ENCODE measurements at regions of chr11 and their contacts with region 1.

Region 1: GRCh38 chr11:61679893-61680621 is at the start of gene DAGLA:
- DNase-seq: peak; percentile 33
- H3K4me3 ChIP-seq: peak within 1 kb of the TSS in 2 of 3 experiments; percentile 45 to 52
- H3K27ac ChIP-seq: no peak within 1 kb of the TSS
- H3K4me1 ChIP-seq: peaks cover 4% of the 10 kb centered on the region
- H3K27me3 ChIP-seq: peaks cover 8% of the 10 kb centered on the region
- CTCF ChIP-seq: peak; percentile 67 to 85
- total RNA-seq, gene DAGLA: 0.33 to 0.67 TPM

Region 2: DNA sequence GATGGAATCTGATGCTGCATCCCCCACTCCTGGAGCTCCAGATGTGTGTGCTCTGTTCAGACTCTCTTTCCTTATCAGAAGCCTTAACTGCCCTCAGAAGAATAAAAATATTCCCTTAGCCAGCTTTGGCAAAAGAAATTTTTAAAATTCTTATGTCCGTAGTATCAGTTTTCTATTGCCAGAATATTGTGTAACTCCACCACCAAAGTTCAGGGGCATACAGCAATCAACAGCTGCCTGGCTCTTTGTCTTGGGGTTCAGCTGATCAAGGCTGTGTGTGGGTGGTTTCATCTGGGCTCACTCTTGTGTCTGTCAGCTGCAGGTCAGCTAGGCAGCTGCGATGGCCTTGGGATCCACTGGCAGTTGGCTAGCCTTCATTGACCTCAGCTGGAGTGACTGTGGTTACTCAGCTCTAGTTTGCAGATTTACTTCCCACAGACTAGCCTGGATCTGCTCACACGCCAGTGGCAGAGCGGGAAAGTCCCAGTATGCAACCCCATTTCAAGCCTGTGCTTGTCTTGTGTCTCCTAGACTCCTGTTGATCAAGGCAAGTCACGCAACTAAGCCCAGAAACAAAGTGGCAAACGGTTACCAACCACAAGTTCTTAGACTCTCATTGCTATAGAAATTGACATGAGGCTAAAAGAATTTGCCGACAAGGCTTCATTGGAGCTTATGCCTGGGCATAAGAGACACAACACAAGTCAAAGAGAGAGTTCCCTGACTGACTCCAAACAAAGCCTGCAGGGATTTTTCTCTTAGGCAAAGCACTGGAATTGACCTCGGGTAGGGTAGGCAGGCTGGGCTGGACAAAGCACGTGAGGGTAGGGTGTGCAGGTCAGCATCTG is 310.5 kb before region 1 on chr11:
- CTCF ChIA-PET with region 1: no interaction called
- dilution Hi-C with region 1: no loop called
- in situ Hi-C with region 1: no loop called
- intact Hi-C with region 1: no loop called
- DNase-seq: peak; percentile 100
- H3K4me3 ChIP-seq: no peak overlapping the region
- H3K27ac ChIP-seq: peak overlapping the region; percentile 93
- H3K4me1 ChIP-seq: peaks cover 24% of the 10 kb centered on the region
- H3K27me3 ChIP-seq: no peaks in the 10 kb centered on the region
- CTCF ChIP-seq: no peak

Region 3: GRCh38 chr11:61581030-61581928 is 98.8 kb before region 1 on chr11 and contains the start of gene SYT7:
- CTCF ChIA-PET with region 1: no interaction called
- dilution Hi-C with region 1: loop called (anchors 5 kb)
- in situ Hi-C with region 1: no loop called
- intact Hi-C with region 1: no loop called
- DNase-seq: peak; percentile 96
- H3K4me3 ChIP-seq: peak within 1 kb of the TSS; percentile 55 to 80 (median 58)
- H3K27ac ChIP-seq: no peak within 1 kb of the TSS
- H3K4me1 ChIP-seq: peaks cover 8% of the 10 kb centered on the region
- H3K27me3 ChIP-seq: peaks cover 12% of the 10 kb centered on the region
- CTCF ChIP-seq: peak; percentile 5 to 21
- total RNA-seq, gene SYT7: 4.7 to 17.7 TPM

Region 4: DNA sequence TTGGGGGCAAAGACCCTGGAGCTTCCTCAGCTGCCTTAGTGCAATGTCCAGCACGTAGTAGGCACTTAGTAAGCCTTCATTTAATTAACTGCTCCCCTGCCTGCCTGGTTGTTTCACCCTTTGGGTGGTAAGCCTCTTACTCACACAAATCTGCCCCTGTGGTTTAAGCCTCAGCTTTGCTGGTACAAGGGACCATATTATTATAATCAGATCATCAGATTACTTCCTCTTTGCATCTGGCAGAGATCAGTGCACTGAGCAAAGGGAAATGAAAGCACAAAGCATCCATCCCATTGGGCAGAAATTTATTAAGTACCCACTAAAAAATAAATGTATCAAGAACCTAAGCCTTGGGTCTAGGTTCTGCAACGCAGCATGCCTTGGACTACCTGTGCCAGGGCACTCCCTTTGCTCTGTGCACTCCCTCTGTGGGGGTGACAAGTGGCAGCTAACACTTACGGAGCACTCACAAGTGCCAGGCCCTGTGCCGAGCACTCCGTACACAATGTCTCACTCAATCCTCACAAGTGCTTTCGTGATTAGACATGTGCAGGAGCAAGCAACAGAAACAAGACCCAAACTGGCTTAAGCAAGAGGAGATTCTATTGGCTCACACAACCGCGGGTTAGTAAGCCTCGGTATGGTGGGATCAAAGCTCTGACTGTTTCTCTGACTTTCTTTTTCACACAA is 34.7 kb before region 1 on chr11:
- CTCF ChIA-PET with region 1: no interaction called
- dilution Hi-C with region 1: loop called (anchors 5 kb)
- in situ Hi-C with region 1: no loop called
- intact Hi-C with region 1: no loop called
- DNase-seq: no peak
- H3K4me3 ChIP-seq: no peak overlapping the region
- H3K27ac ChIP-seq: no peak overlapping the region
- H3K4me1 ChIP-seq: no peaks in the 10 kb centered on the region
- H3K27me3 ChIP-seq: no peaks in the 10 kb centered on the region
- CTCF ChIP-seq: no peak

Region 5: GRCh38 chr11:61695917-61696316 is 15.9 kb after region 1 on chr11:
- CTCF ChIA-PET with region 1: no interaction called
- dilution Hi-C with region 1: no loop called
- in situ Hi-C with region 1: no loop called
- intact Hi-C with region 1: loop called (anchors 1 kb)
- DNase-seq: peak; percentile 91
- H3K4me3 ChIP-seq: no peak overlapping the region
- H3K27ac ChIP-seq: peak overlapping the region; percentile 28
- H3K4me1 ChIP-seq: peaks cover 60% of the 10 kb centered on the region
- H3K27me3 ChIP-seq: no peaks in the 10 kb centered on the region
- CTCF ChIP-seq: no peak

Region 6: DNA sequence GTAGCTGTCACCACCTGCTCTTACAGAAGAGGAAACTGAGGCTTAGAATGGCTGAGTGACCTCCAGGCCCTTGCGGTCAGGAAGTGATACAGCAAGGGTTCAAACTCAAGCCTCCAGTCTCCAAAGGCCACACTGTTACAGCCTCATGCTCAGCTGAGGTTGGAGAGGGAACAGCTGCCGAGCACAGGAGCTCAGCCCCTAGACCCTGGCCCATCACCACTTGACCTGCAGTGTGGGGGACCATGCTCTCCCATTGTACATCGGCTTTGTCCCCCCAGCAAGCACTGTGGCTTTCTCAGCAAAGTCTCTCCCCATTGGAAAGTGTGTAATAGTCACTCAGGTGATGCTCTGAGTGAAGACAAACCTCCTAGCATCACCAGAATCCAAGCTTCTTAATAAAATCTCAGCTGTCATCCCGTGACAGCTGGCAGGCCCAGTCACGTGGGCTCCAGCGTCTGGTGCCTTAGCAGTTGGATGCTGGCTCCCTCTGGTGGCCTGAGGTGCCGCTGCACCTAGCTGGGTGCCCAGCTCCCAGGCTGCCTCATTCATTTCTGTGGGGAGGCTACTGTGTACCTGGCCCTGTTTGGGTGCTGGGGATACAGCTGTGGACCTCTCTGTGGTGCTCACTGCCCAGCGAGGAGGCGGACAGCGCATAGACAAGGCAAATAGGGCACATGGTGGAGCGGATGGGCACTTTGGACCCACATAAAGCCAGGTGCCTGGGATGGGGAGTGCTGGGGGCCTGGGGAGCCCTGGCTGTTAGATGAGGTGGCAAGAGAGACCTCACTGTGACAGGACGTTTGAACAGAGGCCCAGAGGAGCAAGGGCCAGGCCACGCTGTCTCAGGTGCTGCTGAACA is 53.3 kb after region 1 on chr11:
- CTCF ChIA-PET with region 1: interaction called, 3 read pairs
- dilution Hi-C with region 1: loop called (anchors 5 kb)
- in situ Hi-C with region 1: loop called (anchors 5 kb)
- intact Hi-C with region 1: loop called (anchors 1 kb)
- DNase-seq: peak; percentile 70
- H3K4me3 ChIP-seq: no peak overlapping the region
- H3K27ac ChIP-seq: no peak overlapping the region
- H3K4me1 ChIP-seq: peaks cover 27% of the 10 kb centered on the region
- H3K27me3 ChIP-seq: no peaks in the 10 kb centered on the region
- CTCF ChIP-seq: peak; percentile 99 to 100

Region 7: DNA sequence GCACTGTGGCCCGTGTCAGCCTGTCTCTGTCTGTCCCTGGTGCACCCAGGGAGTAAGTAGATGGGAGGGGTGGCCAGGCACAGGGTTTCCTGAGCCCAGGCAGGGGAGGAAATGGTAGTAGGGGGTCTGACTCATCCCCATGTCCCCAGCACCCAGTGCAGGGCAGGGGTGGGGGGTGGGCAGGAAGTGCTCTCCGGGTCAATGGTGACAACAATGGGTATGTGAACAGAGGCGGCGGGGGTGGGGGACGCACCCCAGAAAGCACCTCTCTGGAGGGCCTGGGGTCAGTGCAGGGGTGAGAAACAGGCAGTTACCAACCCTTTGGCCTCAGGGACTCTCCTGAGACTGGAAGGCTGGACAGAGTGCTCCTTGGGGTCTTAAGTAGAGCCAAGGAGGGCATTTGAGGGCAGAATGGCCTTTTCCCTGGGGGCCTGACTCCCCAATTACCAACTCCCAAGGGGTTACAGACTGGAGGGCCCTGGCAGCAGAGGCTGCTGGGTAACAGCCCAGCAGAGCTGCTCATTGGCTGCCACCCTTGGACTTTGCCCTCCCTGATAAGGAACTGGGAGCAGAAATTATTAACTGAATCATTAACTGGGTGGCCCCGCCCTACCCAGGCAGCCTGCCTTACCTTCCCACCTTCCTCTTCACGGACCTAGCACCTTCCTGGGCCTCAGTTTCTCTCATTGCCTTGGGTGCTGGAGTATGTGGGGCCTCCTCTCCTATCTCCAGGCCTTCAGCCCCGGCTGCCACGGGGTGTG is 76.6 kb after region 1 on chr11:
- CTCF ChIA-PET with region 1: no interaction called
- dilution Hi-C with region 1: loop called (anchors 5 kb)
- in situ Hi-C with region 1: no loop called
- intact Hi-C with region 1: no loop called
- DNase-seq: no peak
- H3K4me3 ChIP-seq: no peak overlapping the region
- H3K27ac ChIP-seq: no peak overlapping the region
- H3K4me1 ChIP-seq: no peaks in the 10 kb centered on the region
- H3K27me3 ChIP-seq: peaks cover 3% of the 10 kb centered on the region
- CTCF ChIP-seq: no peak

Region 8: DNA sequence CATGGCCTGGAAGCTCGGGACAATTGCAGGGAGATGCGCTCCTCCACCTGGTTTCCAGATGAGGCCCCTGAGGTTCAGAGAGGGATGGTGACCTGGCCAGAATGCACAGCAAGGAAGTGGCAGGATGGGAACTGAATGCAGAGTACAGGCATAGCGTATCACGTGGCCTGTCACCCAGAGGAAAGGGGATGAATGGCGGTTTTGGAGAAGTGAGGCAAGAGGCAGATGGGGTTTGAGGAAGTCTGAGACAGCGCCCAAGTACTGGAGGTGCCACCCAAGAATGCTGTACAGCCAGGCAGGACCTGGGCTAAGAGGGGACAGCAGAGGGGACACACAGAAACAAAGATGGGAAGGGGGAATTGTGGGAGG is 232.5 kb after region 1 on chr11:
- CTCF ChIA-PET with region 1: no interaction called
- dilution Hi-C with region 1: loop called (anchors 5 kb)
- in situ Hi-C with region 1: no loop called
- intact Hi-C with region 1: no loop called
- DNase-seq: no peak
- H3K4me3 ChIP-seq: no peak overlapping the region
- H3K27ac ChIP-seq: no peak overlapping the region
- H3K4me1 ChIP-seq: peaks cover 5% of the 10 kb centered on the region
- H3K27me3 ChIP-seq: peaks cover under 1% of the 10 kb centered on the region
- CTCF ChIP-seq: no peak

Measured in mammary epithelial cell (primary cell).